Mammary epithelial cell (primary cell): ENCODE measurements at regions of chr1 and their contacts with region 1.

Region 1: GRCh38 chr1:168178638-168179437 is at the start of gene TIPRL:
- DNase-seq: peak; percentile 99
- H3K4me3 ChIP-seq: peak within 1 kb of the TSS; percentile 78 to 94 (median 88)
- H3K27ac ChIP-seq: peak within 1 kb of the TSS; percentile 78
- H3K4me1 ChIP-seq: peaks cover 15% of the 10 kb centered on the region
- H3K27me3 ChIP-seq: no peaks in the 10 kb centered on the region
- CTCF ChIP-seq: peak; percentile 39 to 69
- total RNA-seq, gene TIPRL: 32.5 to 46.0 TPM

Region 2: DNA sequence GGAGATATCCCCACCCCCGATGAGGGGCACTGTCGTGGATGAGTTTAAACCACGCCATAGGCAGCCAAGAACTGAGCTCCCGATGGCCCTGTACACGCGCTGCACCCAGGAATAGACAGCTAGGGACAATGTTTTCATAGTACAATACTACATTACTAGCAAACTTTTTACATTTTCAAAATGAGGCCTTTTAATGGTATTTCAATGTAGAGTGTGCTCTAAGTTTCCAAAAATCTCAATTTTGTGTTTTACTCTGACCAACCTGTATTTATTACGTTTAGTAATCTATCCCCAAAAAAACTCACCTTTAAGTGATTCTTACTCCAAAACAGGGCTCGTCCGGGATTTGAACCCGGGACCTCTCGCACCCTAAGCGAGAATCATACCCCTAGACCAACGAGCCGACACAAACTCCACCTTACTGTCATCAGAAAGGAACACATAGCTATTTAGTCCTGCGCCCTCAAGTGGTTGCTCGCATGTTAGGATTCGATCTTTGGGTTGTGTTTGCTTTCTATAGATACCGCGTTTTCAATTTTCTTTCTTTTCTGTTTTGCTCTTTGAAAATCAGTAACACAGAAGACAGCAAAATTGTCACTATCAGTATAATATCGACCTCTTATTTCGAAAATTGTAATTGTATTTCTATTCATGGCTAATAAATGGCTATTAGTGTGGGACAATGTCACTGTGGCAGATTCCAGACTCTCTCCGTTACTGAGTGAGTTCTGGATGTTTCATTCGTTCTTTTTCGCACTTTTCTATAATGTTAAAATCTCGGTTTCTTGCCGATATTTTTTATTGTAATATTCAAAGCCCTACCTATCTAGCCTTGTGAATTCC is 463.5 kb before region 1 on chr1:
- CTCF ChIA-PET with region 1: no interaction called
- dilution Hi-C with region 1: no loop called
- in situ Hi-C with region 1: no loop called
- intact Hi-C with region 1: loop called (anchors 1 kb)
- DNase-seq: peak; percentile 83
- H3K4me3 ChIP-seq: peak overlapping the region; percentile 79 to 85 (median 84)
- H3K27ac ChIP-seq: peak overlapping the region; percentile 89
- H3K4me1 ChIP-seq: peaks cover 13% of the 10 kb centered on the region
- H3K27me3 ChIP-seq: no peaks in the 10 kb centered on the region
- CTCF ChIP-seq: peak; percentile 88 to 99

Region 3: DNA sequence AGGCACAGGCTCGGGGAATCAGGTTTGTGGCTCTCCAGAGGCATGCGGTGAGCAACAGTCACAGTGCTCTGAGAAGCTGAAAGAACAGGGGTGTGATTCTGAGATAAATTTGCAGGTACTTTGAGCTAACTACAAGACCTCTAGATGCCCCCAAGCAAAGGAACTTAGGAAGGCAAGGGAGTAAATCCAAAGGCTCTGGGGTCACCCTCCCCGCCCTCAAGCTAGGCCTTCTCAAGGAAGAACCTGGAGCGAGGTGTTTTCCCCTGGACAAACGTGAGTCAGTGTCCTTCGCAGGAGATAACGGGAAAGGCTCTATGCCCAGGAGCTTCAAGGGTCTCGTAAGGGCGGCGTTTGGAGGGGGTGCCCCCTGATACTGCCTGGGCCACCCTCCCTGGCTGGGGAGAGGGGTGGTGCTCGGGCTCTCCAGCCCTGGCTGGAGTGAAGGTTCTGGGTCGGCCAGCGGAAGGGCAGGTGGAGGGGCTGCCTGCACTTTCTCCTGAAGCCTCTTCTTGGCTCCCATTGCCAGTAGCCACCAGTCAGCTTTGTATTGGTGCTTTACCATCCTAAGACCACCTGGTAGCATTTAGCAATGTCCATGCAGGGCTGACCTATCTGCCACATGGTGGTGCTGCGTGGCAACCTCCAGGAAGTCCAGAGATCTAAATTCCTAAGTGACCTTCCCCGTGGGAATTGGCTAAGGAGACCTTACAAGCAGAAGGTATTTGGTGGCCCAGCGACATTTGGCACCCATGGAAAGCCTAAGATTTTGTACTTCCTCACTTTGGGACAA is 86.1 kb before region 1 on chr1:
- CTCF ChIA-PET with region 1: no interaction called
- dilution Hi-C with region 1: no loop called
- in situ Hi-C with region 1: no loop called
- intact Hi-C with region 1: no loop called
- DNase-seq: no peak
- H3K4me3 ChIP-seq: no peak overlapping the region
- H3K27ac ChIP-seq: no peak overlapping the region
- H3K4me1 ChIP-seq: no peaks in the 10 kb centered on the region
- H3K27me3 ChIP-seq: no peaks in the 10 kb centered on the region
- CTCF ChIP-seq: peak; percentile 18 to 43

Region 4: GRCh38 chr1:168112673-168113305 is 66.0 kb before region 1 on chr1:
- CTCF ChIA-PET with region 1: no interaction called
- dilution Hi-C with region 1: no loop called
- in situ Hi-C with region 1: loop called in 1 of 2 experiments (anchors 10 kb)
- intact Hi-C with region 1: loop called (anchors 1 kb)
- DNase-seq: peak; percentile 99
- H3K4me3 ChIP-seq: no peak overlapping the region
- H3K27ac ChIP-seq: peak overlapping the region; percentile 71
- H3K4me1 ChIP-seq: peaks cover 37% of the 10 kb centered on the region
- H3K27me3 ChIP-seq: no peaks in the 10 kb centered on the region
- CTCF ChIP-seq: no peak

Region 5: DNA sequence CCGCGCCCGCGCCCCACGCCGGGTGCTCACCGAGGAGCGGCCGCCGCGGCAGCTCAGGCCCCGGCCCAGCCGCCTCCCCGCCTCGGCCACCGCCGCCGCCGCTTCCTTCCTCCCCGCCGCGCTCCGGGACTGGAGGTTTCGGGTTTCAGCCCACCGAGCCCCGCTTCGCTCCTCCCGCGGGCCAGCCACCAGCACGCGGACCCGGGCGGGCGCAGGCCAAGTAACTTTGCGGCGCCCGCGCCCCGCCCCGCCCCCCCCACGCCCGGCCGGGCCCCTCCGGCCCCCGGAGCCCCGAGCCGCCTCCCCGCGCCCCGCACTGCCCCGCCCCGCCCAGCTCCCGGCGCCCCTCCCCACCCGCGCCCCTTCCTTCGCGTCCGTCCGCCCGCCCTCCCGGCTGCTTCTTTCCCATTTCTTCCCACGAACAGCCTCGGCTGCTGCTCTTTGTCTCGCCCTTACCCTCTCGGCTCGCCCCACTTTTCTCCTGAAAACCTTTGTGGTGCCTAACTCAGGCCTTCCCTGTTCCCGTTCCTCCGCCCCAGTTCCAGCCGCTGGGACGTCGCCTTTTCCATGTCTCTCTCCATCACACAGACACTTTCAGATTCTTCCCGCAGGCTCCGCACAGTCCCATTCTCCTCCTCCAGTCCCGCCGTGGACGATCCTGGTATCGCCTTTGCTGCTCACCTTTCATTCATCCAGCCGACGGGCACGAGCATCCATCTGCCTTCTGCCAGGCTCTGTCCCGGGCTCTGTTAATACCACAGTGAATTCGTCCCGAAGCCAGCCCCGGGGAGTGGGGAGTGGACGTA is 41.9 kb before region 1 on chr1 and contains the start of gene GPR161:
- CTCF ChIA-PET with region 1: no interaction called
- dilution Hi-C with region 1: no loop called
- in situ Hi-C with region 1: no loop called
- intact Hi-C with region 1: loop called (anchors 2 kb)
- DNase-seq: peak; percentile 57
- H3K4me3 ChIP-seq: peak within 1 kb of the TSS; percentile 46 to 73 (median 67)
- H3K27ac ChIP-seq: peak within 1 kb of the TSS; percentile 1
- H3K4me1 ChIP-seq: peaks cover 3% of the 10 kb centered on the region
- H3K27me3 ChIP-seq: no peaks in the 10 kb centered on the region
- CTCF ChIP-seq: no peak
- total RNA-seq, gene GPR161: 15.0 to 27.1 TPM

Region 6: DNA sequence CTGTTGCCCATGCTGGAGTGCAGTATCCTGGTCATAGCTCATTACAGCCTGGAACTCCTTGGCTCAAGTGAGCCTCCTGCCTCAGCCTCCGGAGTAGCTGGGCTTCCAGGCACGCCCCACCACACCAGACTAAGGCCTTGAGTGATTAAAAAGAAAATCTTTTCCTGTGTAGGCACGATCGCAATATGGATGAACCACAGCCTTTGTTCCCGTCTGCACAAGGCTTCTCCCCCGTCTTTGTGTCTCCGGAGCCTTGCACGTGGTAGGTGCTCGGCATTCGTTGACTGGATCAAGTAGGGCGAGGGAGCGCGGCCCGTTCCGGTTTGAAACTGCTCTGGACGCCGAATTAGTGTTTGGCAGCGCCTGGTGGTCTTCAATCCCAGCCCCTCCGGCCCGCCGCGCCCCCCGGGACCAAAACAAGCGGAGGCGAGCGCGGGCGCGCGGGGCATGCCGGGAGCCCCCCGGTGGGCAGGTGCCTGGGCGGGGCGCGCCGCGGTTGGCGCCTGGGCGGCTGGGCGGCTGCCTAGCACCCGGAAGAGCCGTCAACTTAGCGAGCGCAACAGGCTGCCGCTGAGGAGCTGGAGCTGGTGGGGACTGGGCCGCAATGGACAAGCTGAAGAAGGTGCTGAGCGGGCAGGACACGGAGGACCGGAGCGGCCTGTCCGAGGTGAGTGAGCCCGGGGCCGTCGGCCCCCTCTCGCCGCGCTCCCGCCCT is 46.8 kb after region 1 on chr1 and contains the start of gene SFT2D2:
- CTCF ChIA-PET with region 1: no interaction called
- dilution Hi-C with region 1: no loop called
- in situ Hi-C with region 1: no loop called
- intact Hi-C with region 1: loop called (anchors 2 kb)
- DNase-seq: peak; percentile 82
- H3K4me3 ChIP-seq: peak within 1 kb of the TSS; percentile 75 to 88 (median 82)
- H3K27ac ChIP-seq: peak within 1 kb of the TSS; percentile 78
- H3K4me1 ChIP-seq: peaks cover 30% of the 10 kb centered on the region
- H3K27me3 ChIP-seq: no peaks in the 10 kb centered on the region
- CTCF ChIP-seq: no peak
- total RNA-seq, gene SFT2D2: 47.3 to 56.6 TPM

Region 7: DNA sequence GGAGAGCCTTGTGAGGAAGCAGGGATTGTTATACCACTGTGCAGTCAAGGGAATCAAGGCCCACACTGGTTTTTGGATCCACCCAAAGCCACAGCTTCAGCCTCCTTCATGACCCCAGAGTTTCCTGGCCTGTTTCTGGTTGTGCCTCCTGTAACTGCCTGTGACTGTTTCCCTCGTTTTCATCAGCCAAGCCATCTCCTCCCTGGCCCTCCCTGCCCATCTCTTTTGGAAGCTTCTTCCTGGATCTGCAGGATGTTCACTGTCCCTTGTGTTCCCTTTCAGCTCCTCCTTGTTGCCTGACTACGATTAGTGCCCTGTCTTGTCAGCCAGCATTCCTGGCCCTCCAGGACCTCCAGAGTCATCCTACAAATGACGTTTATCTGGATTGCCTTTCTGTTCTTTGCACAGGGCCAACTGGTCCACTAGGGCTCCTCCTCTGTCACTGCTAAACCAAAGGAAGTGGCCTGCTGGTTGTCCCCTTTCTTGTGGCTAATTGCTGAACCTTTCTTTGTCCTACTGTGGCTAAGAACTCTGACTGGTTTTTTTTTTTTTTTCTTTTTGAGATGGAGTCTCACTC is 64.9 kb after region 1 on chr1:
- CTCF ChIA-PET with region 1: no interaction called
- dilution Hi-C with region 1: no loop called
- in situ Hi-C with region 1: no loop called
- intact Hi-C with region 1: no loop called
- DNase-seq: no peak
- H3K4me3 ChIP-seq: no peak overlapping the region
- H3K27ac ChIP-seq: no peak overlapping the region
- H3K4me1 ChIP-seq: no peaks in the 10 kb centered on the region
- H3K27me3 ChIP-seq: no peaks in the 10 kb centered on the region
- CTCF ChIP-seq: no peak

Region 8: DNA sequence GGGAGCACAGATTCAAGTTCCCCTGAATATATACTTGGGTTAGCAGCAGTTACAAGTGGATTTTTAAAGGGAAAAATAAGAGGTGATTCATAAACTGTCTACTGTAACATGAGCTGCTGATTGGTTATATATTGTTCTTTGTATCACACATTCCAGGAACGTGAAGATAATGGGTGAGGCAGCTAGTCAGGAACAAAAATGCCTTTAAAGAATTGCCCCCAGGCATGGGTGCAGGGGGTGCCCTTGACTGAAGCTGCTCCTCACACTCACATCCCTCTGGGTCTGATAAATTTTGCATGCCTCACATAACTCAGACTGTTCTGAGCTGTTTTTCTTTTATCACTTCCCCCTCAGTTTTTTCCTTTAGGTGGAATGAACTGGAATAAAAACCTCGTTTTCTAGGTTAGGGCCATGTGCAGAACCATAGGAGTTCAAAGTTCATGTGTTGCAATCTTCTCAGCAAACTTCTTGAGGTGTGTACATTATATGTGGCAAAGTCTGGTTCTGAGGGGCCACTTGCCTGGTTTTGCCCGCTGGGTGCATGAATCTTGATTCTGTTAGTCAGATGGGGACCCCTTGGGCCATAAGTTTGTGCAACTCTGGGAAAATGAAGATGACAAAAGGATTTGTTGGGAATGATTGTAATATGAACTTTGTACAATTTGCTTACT is 123.0 kb after region 1 on chr1:
- CTCF ChIA-PET with region 1: no interaction called
- dilution Hi-C with region 1: no loop called
- in situ Hi-C with region 1: no loop called
- intact Hi-C with region 1: loop called (anchors 5 kb)
- DNase-seq: peak; percentile 94
- H3K4me3 ChIP-seq: no peak overlapping the region
- H3K27ac ChIP-seq: peak overlapping the region; percentile 76
- H3K4me1 ChIP-seq: peaks cover 34% of the 10 kb centered on the region
- H3K27me3 ChIP-seq: no peaks in the 10 kb centered on the region
- CTCF ChIP-seq: no peak

Region 9: DNA sequence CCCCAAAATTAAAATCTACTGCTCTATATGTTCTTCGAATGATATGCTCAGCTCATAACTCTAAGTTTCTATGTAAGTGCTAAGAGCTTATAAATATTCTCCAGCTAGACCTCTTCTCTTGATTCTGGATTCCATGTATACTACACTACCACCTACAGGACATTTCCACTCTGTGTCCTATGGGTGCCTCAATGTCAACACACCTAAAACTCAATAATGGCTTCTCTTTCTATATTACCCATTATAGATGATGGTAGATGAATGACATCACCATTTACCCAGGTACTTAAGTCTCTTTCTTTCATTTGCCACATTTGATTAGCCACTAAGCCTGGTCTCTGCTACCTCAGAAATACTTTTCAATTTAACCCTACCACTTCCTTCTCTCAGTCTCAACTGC is 143.1 kb after region 1 on chr1:
- CTCF ChIA-PET with region 1: no interaction called
- dilution Hi-C with region 1: no loop called
- in situ Hi-C with region 1: no loop called
- intact Hi-C with region 1: loop called (anchors 1 kb)
- DNase-seq: peak; percentile 57
- H3K4me3 ChIP-seq: no peak overlapping the region
- H3K27ac ChIP-seq: no peak overlapping the region
- H3K4me1 ChIP-seq: peaks cover 15% of the 10 kb centered on the region
- H3K27me3 ChIP-seq: no peaks in the 10 kb centered on the region
- CTCF ChIP-seq: peak; percentile 51 to 67